Activated CD4-positive, alpha-beta T cell treated with anti-CD3 and anti-CD28 coated beads for 36 hours (primary cell): ENCODE measurements at regions of chr10 and their contacts with region 1.

Region 1: DNA sequence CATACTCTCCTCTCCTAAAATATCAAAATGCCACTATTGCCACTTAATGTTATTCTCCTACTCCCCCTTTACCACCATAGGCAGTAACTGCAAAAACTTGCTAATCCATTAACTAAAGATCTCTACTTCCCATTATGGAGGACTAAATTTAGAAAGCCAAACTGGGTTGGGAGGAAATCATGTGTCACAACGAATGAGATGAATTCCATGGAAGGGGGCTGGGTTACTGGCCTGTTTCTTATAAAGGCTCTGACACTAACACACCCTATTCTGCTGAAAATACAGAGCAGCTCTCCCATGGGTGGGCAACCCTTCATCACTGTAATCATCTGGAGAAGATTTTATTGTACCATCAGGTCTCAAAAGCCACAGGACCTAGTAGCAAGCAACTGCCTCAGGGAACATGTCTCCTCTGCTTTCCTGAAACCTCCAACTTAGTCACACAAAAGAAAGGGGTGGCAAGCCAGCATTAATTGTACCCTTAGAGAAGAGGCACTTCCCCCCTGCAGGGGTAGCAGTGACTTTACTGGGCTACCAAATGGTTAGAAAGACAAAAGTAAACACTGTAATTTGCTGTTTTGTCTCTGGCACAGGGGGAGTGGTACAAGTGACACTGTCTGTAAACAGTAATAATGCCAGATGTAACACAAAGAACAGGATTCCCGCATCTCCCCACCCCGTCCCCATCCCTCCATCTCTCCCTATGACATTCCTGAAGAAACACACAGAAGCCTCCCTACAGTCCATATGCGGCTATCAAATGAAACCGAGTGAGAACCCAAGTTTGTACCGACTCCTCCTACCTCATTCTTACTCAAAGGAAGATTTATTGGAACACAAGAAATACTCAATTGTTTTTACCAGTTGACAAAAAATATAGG is 81.6 kb downstream of the ARMH3 start:
- DNase-seq: peak; percentile 7
- ATAC-seq: no peak
- H3K4me3 Mint-ChIP-seq: peak overlapping the region; percentile 53
- H3K27ac Mint-ChIP-seq: peak overlapping the region; percentile 79
- H3K4me1 Mint-ChIP-seq: peaks cover 32% of the 10 kb centered on the region
- H3K27me3 Mint-ChIP-seq: no peaks in the 10 kb centered on the region

Region 2: DNA sequence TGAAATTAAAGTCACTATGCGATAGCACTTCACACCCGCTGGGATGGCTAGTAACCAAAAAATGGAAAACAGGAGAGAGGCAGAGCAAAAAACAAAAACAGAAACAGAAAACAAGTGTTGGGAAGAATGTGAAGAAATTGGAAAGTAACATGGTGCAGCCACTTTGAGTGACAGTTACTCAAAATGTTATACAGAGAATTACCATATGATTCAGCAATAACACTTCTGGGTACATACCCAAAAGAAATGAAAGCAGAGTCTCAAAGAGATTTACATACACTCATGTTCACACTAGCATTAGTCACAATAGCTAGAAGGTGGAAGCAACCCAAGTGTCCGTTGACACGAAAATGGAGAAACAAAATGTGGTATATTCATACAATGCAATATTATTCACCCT is 42.1 kb before region 1 on chr10:
- CTCF ChIA-PET with region 1: no interaction called
- POLR2A ChIA-PET with region 1: no interaction called
- intact Hi-C with region 1: loop called in 1 of 2 experiments (anchors 1 kb)
- DNase-seq: peak; percentile 11
- ATAC-seq: peak; percentile 99
- H3K4me3 Mint-ChIP-seq: no peak overlapping the region
- H3K27ac Mint-ChIP-seq: no peak overlapping the region
- H3K4me1 Mint-ChIP-seq: peaks cover 16% of the 10 kb centered on the region
- H3K27me3 Mint-ChIP-seq: no peaks in the 10 kb centered on the region